CD4-positive, alpha-beta memory T cell (primary cell): ENCODE measurements at regions of chr18 and their contacts with region 1.

Region 1: DNA sequence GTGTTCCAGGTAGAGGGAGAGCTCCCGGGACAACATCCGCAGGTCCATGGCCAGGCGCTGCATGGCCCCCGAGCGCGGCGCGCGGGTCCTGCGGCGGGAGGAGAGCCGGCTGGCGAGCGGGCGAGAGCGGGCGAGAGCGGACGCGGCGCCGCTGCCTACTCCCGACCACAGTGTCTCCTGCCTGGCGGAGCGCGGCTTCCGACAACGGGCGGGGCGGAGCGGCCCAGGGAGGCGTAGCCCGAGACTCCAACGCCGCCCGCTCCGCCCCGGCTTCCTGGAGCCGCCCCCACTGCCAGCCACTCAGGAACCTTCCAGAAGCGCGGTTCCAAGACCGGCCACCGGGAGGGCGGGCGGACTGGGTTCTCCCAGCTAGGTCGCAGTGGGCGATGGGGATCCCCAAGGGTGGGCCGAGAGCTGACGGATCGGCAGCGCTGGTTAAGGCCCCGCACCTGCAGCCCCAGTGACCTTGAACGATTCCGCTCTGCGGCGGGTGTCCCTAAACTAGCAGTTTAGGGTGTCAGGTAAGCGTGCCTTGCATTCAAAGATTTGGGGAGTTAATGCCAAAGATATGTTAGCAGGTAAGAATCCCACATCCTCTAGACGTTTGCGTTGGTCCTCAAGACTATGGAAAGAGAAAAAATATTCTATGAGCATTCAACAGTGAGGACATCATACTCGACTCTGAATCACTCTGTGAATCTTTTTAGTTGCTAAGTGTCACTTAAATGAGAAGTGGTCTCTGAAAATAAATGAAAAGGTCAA is at the start of gene ABHD3:
- DNase-seq: peak; percentile 90 to 93 (median 92)
- H3K4me3 ChIP-seq: peak within 1 kb of the TSS; percentile 82 to 92
- H3K4me3 Mint-ChIP-seq: peak within 1 kb of the TSS; percentile 97 to 99 (median 98)
- H3K27ac ChIP-seq: peak within 1 kb of the TSS; percentile 81
- H3K27ac Mint-ChIP-seq: peak within 1 kb of the TSS; percentile 94 to 96 (median 95)
- H3K4me1 ChIP-seq: peaks cover 24% of the 10 kb centered on the region
- H3K4me1 Mint-ChIP-seq: peaks cover 19 to 44% (median 30%) of the 10 kb centered on the region in 4 donors
- H3K27me3 ChIP-seq: no peaks in the 10 kb centered on the region
- H3K27me3 Mint-ChIP-seq: no peaks in the 10 kb centered on the region
- total RNA-seq, gene ABHD3: 63.0 to 65.6 TPM

Region 2: GRCh38 chr18:21612125-21612991 is 92.4 kb before region 1 on chr18 and contains the start of gene SNRPD1:
- CTCF ChIA-PET with region 1: interaction called, 7 read pairs
- POLR2A ChIA-PET with region 1: interaction called, 10 read pairs
- intact Hi-C with region 1: loop called (anchors 1 kb)
- DNase-seq: peak; percentile 83 to 90 (median 86)
- H3K4me3 ChIP-seq: peak within 1 kb of the TSS; percentile 93 to 97
- H3K4me3 Mint-ChIP-seq: peak within 1 kb of the TSS; percentile 97 to 100 (median 99)
- H3K27ac ChIP-seq: peak within 1 kb of the TSS; percentile 85
- H3K27ac Mint-ChIP-seq: peak within 1 kb of the TSS; percentile 97 to 100 (median 99)
- H3K4me1 ChIP-seq: peaks cover 41% of the 10 kb centered on the region
- H3K4me1 Mint-ChIP-seq: peaks cover 26 to 55% (median 37%) of the 10 kb centered on the region in 4 donors
- H3K27me3 ChIP-seq: no peaks in the 10 kb centered on the region
- H3K27me3 Mint-ChIP-seq: no peaks in the 10 kb centered on the region
- total RNA-seq, gene SNRPD1: 24.4 to 24.5 TPM

Region 3: GRCh38 chr18:21682371-21683051 is 22.3 kb before region 1 on chr18:
- CTCF ChIA-PET with region 1: interaction called, 12 read pairs
- POLR2A ChIA-PET with region 1: interaction called, 40 read pairs
- intact Hi-C with region 1: loop called (anchors 1 kb)
- DNase-seq: peak in 4 of 5 donors; percentile 43 to 54 (median 48)
- H3K4me3 ChIP-seq: peak overlapping the region; percentile 61 to 66
- H3K4me3 Mint-ChIP-seq: no peak overlapping the region
- H3K27ac ChIP-seq: peak overlapping the region; percentile 63
- H3K27ac Mint-ChIP-seq: no peak overlapping the region
- H3K4me1 ChIP-seq: peaks cover 37% of the 10 kb centered on the region
- H3K4me1 Mint-ChIP-seq: peaks cover 9 to 19% (median 15%) of the 10 kb centered on the region in 4 donors
- H3K27me3 ChIP-seq: no peaks in the 10 kb centered on the region
- H3K27me3 Mint-ChIP-seq: no peaks in the 10 kb centered on the region

Region 4: GRCh38 chr18:21735452-21736015 is 30.8 kb after region 1 on chr18:
- CTCF ChIA-PET with region 1: interaction called, 6 read pairs
- POLR2A ChIA-PET with region 1: interaction called, 77 read pairs
- intact Hi-C with region 1: loop called (anchors 1 kb)
- DNase-seq: peak; percentile 69 to 80 (median 75)
- H3K4me3 ChIP-seq: no peak overlapping the region
- H3K4me3 Mint-ChIP-seq: peak overlapping the region in 6 of 8 donors; percentile 46 to 71 (median 57)
- H3K27ac ChIP-seq: no peak overlapping the region
- H3K27ac Mint-ChIP-seq: peak overlapping the region; percentile 80 to 92 (median 87)
- H3K4me1 ChIP-seq: peaks cover 21% of the 10 kb centered on the region
- H3K4me1 Mint-ChIP-seq: peaks cover 6 to 40% (median 23%) of the 10 kb centered on the region in 4 donors
- H3K27me3 ChIP-seq: no peaks in the 10 kb centered on the region
- H3K27me3 Mint-ChIP-seq: peaks cover 0 to 2% of the 10 kb centered on the region in 2 donors

Region 5: DNA sequence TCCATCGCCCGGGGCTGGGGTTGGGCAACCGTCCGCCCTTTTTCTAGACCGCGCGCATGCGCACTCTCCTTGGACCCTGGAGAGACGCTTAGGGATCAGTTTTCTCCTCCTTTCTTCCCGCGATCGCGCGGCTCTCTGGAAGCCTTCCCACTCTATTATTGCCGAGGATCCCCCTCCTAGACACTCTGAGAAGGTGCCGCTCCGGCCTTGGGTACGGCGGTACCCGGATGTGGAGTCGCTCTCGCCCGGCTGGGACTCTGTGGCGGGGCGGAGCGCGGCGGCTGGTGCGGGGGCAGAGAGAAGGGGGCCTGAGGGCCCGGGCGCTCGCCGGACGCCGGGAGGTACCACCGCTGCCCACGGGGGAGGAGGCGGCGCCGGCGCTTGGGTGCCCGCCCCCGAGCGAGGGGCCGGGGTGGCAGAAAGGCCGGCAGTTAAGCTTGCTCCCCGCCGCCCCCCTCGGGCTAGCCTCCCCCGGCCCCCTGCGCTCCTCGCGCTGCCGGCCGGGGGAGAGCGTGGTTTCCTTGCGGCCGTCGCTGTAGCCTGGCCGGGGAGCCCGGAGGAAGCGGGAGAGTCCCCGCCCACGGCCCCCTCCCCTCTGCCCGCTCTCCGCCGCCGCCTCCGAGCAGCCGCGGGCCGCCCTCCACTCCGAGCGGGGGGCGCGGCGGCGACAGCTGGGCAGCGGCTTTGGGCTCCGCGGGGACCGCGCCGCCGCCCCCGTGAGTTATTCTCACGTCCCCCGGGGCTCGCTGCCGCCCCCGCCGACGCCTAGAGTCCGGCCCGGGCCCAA is 36.1 kb after region 1 on chr18 and contains the start of gene MIB1:
- CTCF ChIA-PET with region 1: interaction called, 7 read pairs
- POLR2A ChIA-PET with region 1: interaction called, 77 read pairs
- intact Hi-C with region 1: loop called (anchors 1 kb)
- DNase-seq: peak in 2 of 5 donors; percentile 98 to 99
- H3K4me3 ChIP-seq: peak within 1 kb of the TSS in 1 of 2 donors; percentile 100
- H3K4me3 Mint-ChIP-seq: peak within 1 kb of the TSS; percentile 94 to 98 (median 95)
- H3K27ac ChIP-seq: peak within 1 kb of the TSS; percentile 94
- H3K27ac Mint-ChIP-seq: peak within 1 kb of the TSS; percentile 91 to 98 (median 97)
- H3K4me1 ChIP-seq: peaks cover 48% of the 10 kb centered on the region
- H3K4me1 Mint-ChIP-seq: peaks cover 29 to 70% (median 47%) of the 10 kb centered on the region in 4 donors
- H3K27me3 ChIP-seq: no peaks in the 10 kb centered on the region
- H3K27me3 Mint-ChIP-seq: no peaks in the 10 kb centered on the region
- total RNA-seq, gene MIB1: 37.6 to 39.0 TPM